Activated B cell treated with CpG ODN at 0.5 μM for 24 hours (primary cell): ENCODE measurements at regions of chrX and their contacts with region 1.

Region 1: GRCh38 chrX:6021316-6022091 is 207.2 kb downstream of the NLGN4X start:
- DNase-seq: no peak
- ATAC-seq: no peak
- H3K4me3 Mint-ChIP-seq: no peak overlapping the region
- H3K27ac Mint-ChIP-seq: no peak overlapping the region
- H3K4me1 Mint-ChIP-seq: no peaks in the 10 kb centered on the region
- H3K27me3 Mint-ChIP-seq: peaks cover 5% of the 10 kb centered on the region
- CTCF ChIP-seq: no peak

Region 2: DNA sequence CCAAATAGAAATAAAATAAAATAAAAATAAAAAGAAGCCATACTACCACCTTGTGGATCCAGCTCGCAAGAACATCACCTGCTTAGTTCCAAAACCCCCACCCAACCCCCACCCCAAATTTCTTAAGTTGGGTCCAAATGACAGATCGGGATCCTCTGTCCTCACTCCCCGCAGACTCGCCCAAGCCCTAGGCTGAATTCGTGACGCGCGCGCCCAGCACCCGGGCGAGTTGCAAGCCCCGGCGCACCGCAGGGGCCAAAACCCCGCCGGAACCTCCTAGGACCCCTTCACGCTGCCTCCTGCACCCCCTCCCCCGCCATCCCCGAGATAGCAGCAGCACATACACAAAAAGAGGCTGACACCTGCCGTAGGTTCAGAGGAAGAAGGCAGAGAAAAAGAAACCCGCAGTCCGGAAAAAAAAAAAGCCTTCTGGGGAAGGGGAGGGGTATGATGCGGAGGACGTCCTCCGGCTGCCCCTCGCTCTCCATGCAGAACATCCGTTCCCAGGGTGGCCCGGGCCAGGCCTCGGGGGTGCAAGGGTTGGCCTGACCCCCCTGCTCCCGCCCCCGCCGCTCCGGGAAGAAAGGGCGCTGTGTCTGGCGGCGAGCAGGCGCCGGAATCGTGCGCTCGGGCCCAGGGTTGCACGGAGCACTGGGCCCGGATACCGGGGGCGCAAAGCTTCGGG is 204.5 kb after region 1 on chrX:
- CTCF ChIA-PET with region 1: no interaction called
- POLR2A ChIA-PET with region 1: no interaction called
- intact Hi-C with region 1: loop called (anchors 10 kb)
- DNase-seq: no peak
- ATAC-seq: no peak
- H3K4me3 Mint-ChIP-seq: peak overlapping the region; percentile 48
- H3K27ac Mint-ChIP-seq: no peak overlapping the region
- H3K4me1 Mint-ChIP-seq: peaks cover 7% of the 10 kb centered on the region
- H3K27me3 Mint-ChIP-seq: peaks cover 17% of the 10 kb centered on the region
- CTCF ChIP-seq: no peak

Region 3: DNA sequence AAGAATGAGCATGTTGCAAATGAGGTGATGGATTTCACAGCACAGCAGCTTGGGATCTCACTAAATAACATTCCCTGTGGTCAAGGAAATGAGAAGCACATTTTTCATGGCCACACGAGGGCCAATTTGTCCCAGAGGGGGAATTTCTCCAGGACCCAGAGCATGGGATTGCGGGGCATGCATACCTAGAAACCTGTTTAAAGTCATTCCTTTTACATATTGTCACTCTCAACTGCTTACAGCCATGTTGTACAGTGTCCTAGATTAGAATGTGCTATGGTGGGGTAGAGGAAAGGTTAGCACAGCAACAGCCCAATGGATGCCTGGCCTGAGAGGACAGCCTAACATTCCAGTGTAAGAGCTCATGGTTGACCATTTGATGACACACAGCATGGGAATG is 244.5 kb after region 1 on chrX:
- CTCF ChIA-PET with region 1: no interaction called
- POLR2A ChIA-PET with region 1: no interaction called
- intact Hi-C with region 1: no loop called
- DNase-seq: no peak
- ATAC-seq: no peak
- H3K4me3 Mint-ChIP-seq: no peak overlapping the region
- H3K27ac Mint-ChIP-seq: no peak overlapping the region
- H3K4me1 Mint-ChIP-seq: no peaks in the 10 kb centered on the region
- H3K27me3 Mint-ChIP-seq: no peaks in the 10 kb centered on the region
- CTCF ChIP-seq: no peak

Region 4: DNA sequence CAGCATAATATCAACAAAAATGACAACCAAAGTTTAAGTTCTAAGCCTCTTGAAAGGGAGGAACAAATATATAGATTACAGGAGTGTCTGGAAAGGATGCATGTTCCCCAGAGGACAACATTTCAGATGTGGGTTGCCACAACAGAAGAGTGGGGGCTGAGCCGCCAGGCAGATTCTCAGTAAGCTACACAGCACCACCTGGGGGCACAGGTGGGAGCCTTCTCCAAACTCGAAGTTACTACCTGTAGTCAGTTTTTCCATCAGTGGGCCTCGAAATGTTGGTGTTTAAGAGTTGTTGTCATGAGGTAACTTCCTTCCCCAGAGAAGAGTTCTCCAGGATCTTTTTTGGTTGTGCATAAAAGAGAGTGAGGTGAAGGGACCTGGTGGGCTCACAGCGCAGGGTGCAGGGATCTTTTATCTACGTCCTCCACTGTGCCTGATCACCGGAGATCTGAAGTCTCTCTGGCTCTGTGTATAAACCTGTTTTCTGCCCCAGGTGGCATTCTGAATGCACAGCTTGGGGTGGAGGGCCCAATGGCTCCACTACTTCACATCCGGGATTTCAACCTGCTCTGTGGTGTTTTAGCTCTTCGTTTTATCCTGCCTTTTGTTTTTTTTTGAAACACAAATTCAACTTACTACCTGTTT is 1067.6 kb after region 1 on chrX:
- CTCF ChIA-PET with region 1: no interaction called
- POLR2A ChIA-PET with region 1: no interaction called
- intact Hi-C with region 1: loop called (anchors 1 kb)
- DNase-seq: no peak
- ATAC-seq: peak; percentile 38
- H3K4me3 Mint-ChIP-seq: no peak overlapping the region
- H3K27ac Mint-ChIP-seq: peak overlapping the region; percentile 65
- H3K4me1 Mint-ChIP-seq: peaks cover 75% of the 10 kb centered on the region
- H3K27me3 Mint-ChIP-seq: no peaks in the 10 kb centered on the region
- CTCF ChIP-seq: no peak

Region 5: DNA sequence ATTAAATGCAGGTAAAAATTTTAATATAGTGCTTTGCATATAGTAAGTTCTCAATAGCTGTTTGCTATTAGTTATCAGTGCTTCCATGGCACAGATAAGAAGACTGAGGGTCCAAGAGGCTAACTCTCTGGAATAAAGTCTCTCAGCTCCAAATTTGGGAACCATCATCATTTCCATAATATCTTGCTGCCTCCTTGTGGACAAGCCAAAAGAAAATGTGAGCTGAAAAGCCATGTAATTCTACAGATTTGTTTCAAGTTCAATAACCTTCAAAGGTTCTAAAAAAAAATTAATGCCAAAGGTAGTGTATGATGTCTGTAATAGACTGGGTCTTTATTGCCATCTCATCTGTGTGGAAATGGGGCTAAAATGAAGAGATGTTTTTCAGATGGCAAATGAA is 1684.5 kb after region 1 on chrX:
- CTCF ChIA-PET with region 1: no interaction called
- POLR2A ChIA-PET with region 1: no interaction called
- intact Hi-C with region 1: loop called (anchors 10 kb)
- DNase-seq: no peak
- ATAC-seq: no peak
- H3K4me3 Mint-ChIP-seq: no peak overlapping the region
- H3K27ac Mint-ChIP-seq: no peak overlapping the region
- H3K4me1 Mint-ChIP-seq: no peaks in the 10 kb centered on the region
- H3K27me3 Mint-ChIP-seq: no peaks in the 10 kb centered on the region
- CTCF ChIP-seq: no peak

Region 6: DNA sequence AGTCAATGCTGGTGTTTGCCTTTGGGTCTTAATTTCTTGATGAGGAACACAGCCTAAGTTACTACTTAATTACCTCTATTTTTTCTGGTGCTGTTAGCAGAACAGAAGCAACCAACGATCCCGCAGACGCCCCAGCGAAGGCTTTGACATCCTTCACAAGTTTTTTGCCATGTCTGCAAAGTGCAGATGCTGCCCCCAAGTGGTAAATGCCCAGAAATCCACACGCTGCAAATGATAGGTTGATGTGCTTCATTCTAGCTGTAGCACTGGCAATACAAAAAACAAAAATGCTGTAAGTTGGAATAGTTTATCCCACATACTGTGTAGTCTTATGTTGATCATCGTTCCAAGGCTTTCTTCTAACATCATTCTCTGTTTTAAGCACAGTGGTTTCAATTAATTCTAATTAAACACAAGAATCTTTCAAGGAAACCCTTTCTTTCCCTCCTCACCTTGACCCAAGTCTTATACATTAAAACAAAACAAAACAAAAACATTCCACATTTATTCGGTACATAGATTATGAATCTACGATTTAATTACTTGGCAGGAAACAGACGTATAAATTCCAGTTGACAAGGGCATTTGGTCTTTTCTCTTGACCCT is 1904.5 kb after region 1 on chrX:
- CTCF ChIA-PET with region 1: interaction called, 3 read pairs
- POLR2A ChIA-PET with region 1: no interaction called
- intact Hi-C with region 1: loop called (anchors 1 kb)
- DNase-seq: no peak
- ATAC-seq: no peak
- H3K4me3 Mint-ChIP-seq: peak overlapping the region; percentile 48
- H3K27ac Mint-ChIP-seq: peak overlapping the region; percentile 61
- H3K4me1 Mint-ChIP-seq: peaks cover 17% of the 10 kb centered on the region
- H3K27me3 Mint-ChIP-seq: no peaks in the 10 kb centered on the region
- CTCF ChIP-seq: no peak

Region 7: GRCh38 chrX:7941390-7942042 is 1920.0 kb after region 1 on chrX:
- CTCF ChIA-PET with region 1: no interaction called
- POLR2A ChIA-PET with region 1: no interaction called
- intact Hi-C with region 1: loop called (anchors 5 kb)
- DNase-seq: no peak
- ATAC-seq: no peak
- H3K4me3 Mint-ChIP-seq: no peak overlapping the region
- H3K27ac Mint-ChIP-seq: no peak overlapping the region
- H3K4me1 Mint-ChIP-seq: no peaks in the 10 kb centered on the region
- H3K27me3 Mint-ChIP-seq: no peaks in the 10 kb centered on the region
- CTCF ChIP-seq: no peak